Gastrocnemius medialis (tissue), 4 donors: ENCODE measurements at regions of chr12 and their contacts with region 1.

Region 1: DNA sequence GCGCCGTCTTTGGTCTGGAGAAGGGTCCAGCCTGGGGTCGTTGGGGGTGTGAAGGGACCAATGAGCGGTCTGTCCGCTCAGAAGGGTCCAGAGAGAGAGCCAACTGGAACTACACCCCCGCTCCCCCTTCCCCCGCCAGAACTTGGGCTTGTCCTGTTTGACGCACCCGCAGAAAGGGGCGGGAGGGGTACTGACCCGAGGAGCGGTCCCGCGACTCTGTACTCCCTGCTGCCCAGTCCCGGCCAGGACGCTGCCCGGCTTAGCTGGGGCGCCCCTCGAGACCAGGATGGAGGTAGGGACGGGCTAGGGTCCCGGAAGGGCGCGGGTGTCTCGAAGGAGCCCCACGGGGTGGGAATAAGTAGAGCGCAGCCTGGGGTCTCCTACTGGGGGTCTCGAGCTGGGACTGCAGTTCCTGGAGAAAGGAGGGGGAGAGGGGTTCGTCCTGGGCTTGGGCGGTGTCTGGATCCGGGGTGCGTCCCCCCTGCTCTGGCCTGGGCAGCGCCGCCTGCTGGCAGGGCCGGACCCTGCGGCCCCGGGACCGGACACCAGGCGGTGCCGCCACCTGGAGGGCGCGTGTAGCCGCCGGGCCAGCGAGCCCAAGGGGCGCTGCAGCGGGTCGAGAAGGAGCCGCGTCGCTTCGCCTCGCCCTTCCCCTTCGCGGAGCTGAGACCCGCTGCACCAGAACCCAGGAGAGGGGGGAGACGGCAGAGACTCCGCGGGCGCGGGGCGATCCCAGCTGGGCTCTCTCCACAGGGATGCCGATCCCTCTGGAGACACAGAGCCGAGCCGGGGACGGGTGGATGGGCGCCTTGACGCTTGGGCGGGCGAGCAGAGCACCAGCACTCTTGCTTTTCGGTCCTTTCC is 3.8 kb upstream of the CACNB3 start:
- DNase-seq: peak; percentile 49 to 69
- ATAC-seq: peak; percentile 81 to 84
- H3K4me3 ChIP-seq: peak overlapping the region; percentile 78 to 87 (median 82)
- H3K27ac ChIP-seq: peak overlapping the region; percentile 79 to 85 (median 80)
- H3K4me1 ChIP-seq: peaks cover 21 to 33% of the 10 kb centered on the region in 2 donors
- H3K27me3 ChIP-seq: peaks cover 6 to 24% (median 19%) of the 10 kb centered on the region in 3 donors
- CTCF ChIP-seq: peak; percentile 90 to 100 (median 95)
- POLR2A ChIP-seq: peak in 1 of 2 donors; percentile 54

Region 2: GRCh38 chr12:48197971-48198671 is 616.4 kb before region 1 on chr12:
- in situ Hi-C with region 1: no loop called
- intact Hi-C with region 1: loop called (anchors 10 kb)
- DNase-seq: peak; percentile 98 to 99
- ATAC-seq: peak; percentile 92 to 96
- H3K4me3 ChIP-seq: peak overlapping the region; percentile 88 to 94 (median 92)
- H3K27ac ChIP-seq: peak overlapping the region; percentile 97 to 100 (median 99)
- H3K4me1 ChIP-seq: peaks cover 20% of the 10 kb centered on the region in 2 donors
- H3K27me3 ChIP-seq: no peaks in the 10 kb centered on the region
- CTCF ChIP-seq: no peak
- POLR2A ChIP-seq: peak; percentile 97 to 98